Mammary epithelial cell (primary cell): ENCODE measurements at regions of chr19 and their contacts with region 1.

Region 1: GRCh38 chr19:48006762-48007161 is 12.3 kb downstream of the ELSPBP1 start:
- DNase-seq: no peak
- H3K4me3 ChIP-seq: no peak overlapping the region
- H3K27ac ChIP-seq: no peak overlapping the region
- H3K4me1 ChIP-seq: no peaks in the 10 kb centered on the region
- H3K27me3 ChIP-seq: no peaks in the 10 kb centered on the region
- CTCF ChIP-seq: peak; percentile 7 to 14

Region 2: GRCh38 chr19:47540728-47541127 is 466.0 kb before region 1 on chr19:
- CTCF ChIA-PET with region 1: no interaction called
- dilution Hi-C with region 1: no loop called
- in situ Hi-C with region 1: loop called in 1 of 2 experiments (anchors 25 kb)
- intact Hi-C with region 1: no loop called
- DNase-seq: no peak
- H3K4me3 ChIP-seq: no peak overlapping the region
- H3K27ac ChIP-seq: no peak overlapping the region
- H3K4me1 ChIP-seq: no peaks in the 10 kb centered on the region
- H3K27me3 ChIP-seq: no peaks in the 10 kb centered on the region
- CTCF ChIP-seq: peak in 1 of 2 donors; percentile 31

Region 3: GRCh38 chr19:48543121-48544056 is 536.6 kb after region 1 on chr19:
- CTCF ChIA-PET with region 1: no interaction called
- dilution Hi-C with region 1: no loop called
- in situ Hi-C with region 1: loop called in 1 of 2 experiments (anchors 25 kb)
- intact Hi-C with region 1: no loop called
- DNase-seq: peak; percentile 85
- H3K4me3 ChIP-seq: no peak overlapping the region
- H3K27ac ChIP-seq: no peak overlapping the region
- H3K4me1 ChIP-seq: peaks cover 10% of the 10 kb centered on the region
- H3K27me3 ChIP-seq: no peaks in the 10 kb centered on the region
- CTCF ChIP-seq: no peak